Caco-2 (cell line): ENCODE measurements at regions of chr5 and their contacts with region 1.

Region 1: GRCh38 chr5:9082996-9083395 is 462.9 kb downstream of the SEMA5A start:
- DNase-seq: no peak
- H3K4me3 ChIP-seq: no peak overlapping the region
- H3K4me3 Mint-ChIP-seq: no peak overlapping the region
- H3K27ac Mint-ChIP-seq: no peak overlapping the region
- H3K4me1 ChIP-seq: no peaks in the 10 kb centered on the region
- H3K4me1 Mint-ChIP-seq: no peaks in the 10 kb centered on the region
- H3K27me3 ChIP-seq: no peaks in the 10 kb centered on the region
- H3K27me3 Mint-ChIP-seq: no peaks in the 10 kb centered on the region
- CTCF ChIP-seq: no peak

Region 2: DNA sequence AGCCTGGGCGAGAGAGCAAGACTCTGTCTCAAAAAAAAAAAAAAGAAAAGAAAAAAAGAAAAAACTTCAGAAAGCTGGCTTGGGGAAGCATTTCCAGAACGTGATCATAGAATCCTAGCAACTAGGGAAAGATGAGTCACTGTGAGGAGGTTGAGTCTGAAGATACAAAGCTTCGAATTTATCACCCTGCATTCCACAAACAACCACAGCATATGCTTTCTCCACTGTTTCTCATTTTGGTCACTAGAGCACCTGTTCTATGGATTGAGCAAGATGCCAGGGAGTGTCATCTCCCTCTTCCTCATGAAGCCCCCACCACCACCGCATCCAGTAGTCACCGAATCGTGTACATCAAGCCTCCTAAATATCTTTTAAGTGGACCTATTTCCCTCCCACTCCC is 425.0 kb after region 1 on chr5:
- CTCF ChIA-PET with region 1: no interaction called
- POLR2A ChIA-PET with region 1: no interaction called
- intact Hi-C with region 1: loop called (anchors 2 kb)
- DNase-seq: no peak
- H3K4me3 ChIP-seq: no peak overlapping the region
- H3K4me3 Mint-ChIP-seq: no peak overlapping the region
- H3K27ac Mint-ChIP-seq: no peak overlapping the region
- H3K4me1 ChIP-seq: no peaks in the 10 kb centered on the region
- H3K4me1 Mint-ChIP-seq: no peaks in the 10 kb centered on the region
- H3K27me3 ChIP-seq: no peaks in the 10 kb centered on the region
- H3K27me3 Mint-ChIP-seq: no peaks in the 10 kb centered on the region
- CTCF ChIP-seq: no peak